Tibial artery (tissue), 4 donors: ENCODE measurements at regions of chrX and their contacts with region 1.

Region 1: GRCh38 chrX:41561045-41561444 is 113.9 kb downstream of the NYX start:
- DNase-seq: peak in 1 of 2 donors; percentile 21
- H3K4me3 ChIP-seq: no peak overlapping the region
- H3K27ac ChIP-seq: peak overlapping the region; percentile 61 to 66
- H3K4me1 ChIP-seq: peaks cover 0 to 26% (median 6%) of the 10 kb centered on the region in 4 donors
- H3K27me3 ChIP-seq: no peaks in the 10 kb centered on the region
- CTCF ChIP-seq: no peak

Region 2: GRCh38 chrX:41153448-41153847 is 407.6 kb before region 1 on chrX:
- intact Hi-C with region 1: no loop called
- DNase-seq: no peak
- H3K4me3 ChIP-seq: no peak overlapping the region
- H3K27ac ChIP-seq: no peak overlapping the region
- H3K4me1 ChIP-seq: no peaks in the 10 kb centered on the region
- H3K27me3 ChIP-seq: no peaks in the 10 kb centered on the region
- CTCF ChIP-seq: no peak

Region 3: DNA sequence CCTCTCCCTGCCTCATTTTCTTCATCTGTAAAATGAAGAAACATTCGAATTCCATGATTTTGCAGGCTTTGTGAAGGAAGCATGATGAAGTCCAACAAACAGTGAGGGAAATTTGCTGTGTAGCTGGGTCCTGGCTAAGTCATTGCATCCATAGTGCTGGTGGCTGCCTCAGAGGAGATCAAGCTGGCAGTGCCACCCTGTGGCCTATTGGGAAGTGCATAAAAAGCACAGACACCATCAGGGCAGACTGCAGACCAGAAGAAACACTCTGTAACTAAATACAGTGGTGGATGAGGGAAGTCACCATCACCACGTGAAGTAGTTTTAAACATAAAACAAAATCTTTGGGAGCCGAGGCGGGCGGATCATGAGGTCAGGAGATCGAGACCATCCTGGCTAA is 267.8 kb before region 1 on chrX:
- intact Hi-C with region 1: no loop called
- DNase-seq: no peak
- H3K4me3 ChIP-seq: no peak overlapping the region
- H3K27ac ChIP-seq: no peak overlapping the region
- H3K4me1 ChIP-seq: no peaks in the 10 kb centered on the region
- H3K27me3 ChIP-seq: no peaks in the 10 kb centered on the region
- CTCF ChIP-seq: no peak

Region 4: DNA sequence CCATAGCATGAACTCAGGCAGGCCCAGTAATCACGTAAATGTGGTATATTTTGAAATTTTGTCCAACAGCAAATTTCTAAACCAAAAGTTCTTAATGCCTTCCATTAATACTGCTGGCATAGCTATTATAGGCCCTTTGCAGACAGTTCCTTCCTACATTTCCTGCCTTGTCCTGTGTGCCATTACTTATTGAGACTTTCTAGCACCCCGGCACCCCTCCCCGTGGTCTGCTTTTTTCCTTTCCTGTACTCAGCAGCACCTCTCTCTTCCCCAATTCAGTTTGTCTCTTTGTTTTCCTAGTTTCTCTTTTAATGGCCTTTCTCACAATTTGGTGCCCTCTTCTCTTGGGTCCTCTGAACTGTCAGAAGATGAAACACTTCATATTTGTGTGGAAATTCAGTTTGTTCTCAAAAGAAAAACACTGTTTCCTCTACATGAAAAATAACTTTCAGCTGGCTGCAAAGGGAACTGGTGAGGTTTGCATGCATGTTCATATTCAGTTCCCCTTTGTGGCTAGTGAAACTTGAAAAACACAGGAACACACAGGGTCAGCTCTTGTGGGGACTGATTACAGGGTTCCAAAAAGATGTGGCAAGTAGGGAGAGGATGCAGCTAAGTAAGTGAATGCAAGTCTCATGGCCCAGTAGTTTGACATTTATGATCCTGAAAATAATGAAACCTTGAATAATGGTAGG is 144.8 kb after region 1 on chrX:
- intact Hi-C with region 1: loop called (anchors 10 kb)
- DNase-seq: no peak
- H3K4me3 ChIP-seq: no peak overlapping the region
- H3K27ac ChIP-seq: peak overlapping the region; percentile 19 to 33
- H3K4me1 ChIP-seq: peaks cover 0 to 7% (median 0%) of the 10 kb centered on the region in 4 donors
- H3K27me3 ChIP-seq: no peaks in the 10 kb centered on the region
- CTCF ChIP-seq: no peak